ENCODE measurements at regions of chr14 and their contacts with region 1.

Region 1: GRCh38 chr14:51846631-51847488 is 13.6 kb upstream of the GNG2 start:
- H3K4me3 Mint-ChIP-seq: peak overlapping the region; percentile 75
- H3K27ac Mint-ChIP-seq: peak overlapping the region; percentile 93
- H3K4me1 Mint-ChIP-seq: peaks cover 62% of the 10 kb centered on the region
- H3K27me3 Mint-ChIP-seq: no peaks in the 10 kb centered on the region

Region 2: DNA sequence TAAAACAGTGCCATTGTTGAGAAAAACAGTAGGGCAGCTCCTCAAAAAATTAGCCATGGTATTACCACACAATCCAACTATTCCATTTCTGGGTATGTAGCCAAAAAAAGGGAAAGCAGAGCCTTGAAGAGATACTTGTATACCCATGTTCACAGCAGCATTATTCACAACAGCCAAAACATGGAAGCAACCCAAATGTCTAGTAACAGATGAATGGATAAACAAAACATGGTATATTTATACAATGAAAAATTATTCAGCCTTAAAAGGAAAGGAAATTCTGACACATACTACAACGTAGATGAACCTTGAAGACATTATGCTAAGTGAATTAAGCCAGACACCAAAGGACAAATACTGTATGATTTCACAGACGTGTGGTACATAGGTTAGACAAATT is 54.0 kb before region 1 on chr14:
- intact Hi-C with region 1: loop called (anchors 5 kb)
- H3K4me3 Mint-ChIP-seq: no peak overlapping the region
- H3K27ac Mint-ChIP-seq: no peak overlapping the region
- H3K4me1 Mint-ChIP-seq: peaks cover 40% of the 10 kb centered on the region
- H3K27me3 Mint-ChIP-seq: no peaks in the 10 kb centered on the region

Region 3: GRCh38 chr14:51821822-51822221 is 25.0 kb before region 1 on chr14:
- intact Hi-C with region 1: no loop called
- H3K4me3 Mint-ChIP-seq: no peak overlapping the region
- H3K27ac Mint-ChIP-seq: no peak overlapping the region
- H3K4me1 Mint-ChIP-seq: peaks cover 5% of the 10 kb centered on the region
- H3K27me3 Mint-ChIP-seq: peaks cover 15% of the 10 kb centered on the region

Region 4: DNA sequence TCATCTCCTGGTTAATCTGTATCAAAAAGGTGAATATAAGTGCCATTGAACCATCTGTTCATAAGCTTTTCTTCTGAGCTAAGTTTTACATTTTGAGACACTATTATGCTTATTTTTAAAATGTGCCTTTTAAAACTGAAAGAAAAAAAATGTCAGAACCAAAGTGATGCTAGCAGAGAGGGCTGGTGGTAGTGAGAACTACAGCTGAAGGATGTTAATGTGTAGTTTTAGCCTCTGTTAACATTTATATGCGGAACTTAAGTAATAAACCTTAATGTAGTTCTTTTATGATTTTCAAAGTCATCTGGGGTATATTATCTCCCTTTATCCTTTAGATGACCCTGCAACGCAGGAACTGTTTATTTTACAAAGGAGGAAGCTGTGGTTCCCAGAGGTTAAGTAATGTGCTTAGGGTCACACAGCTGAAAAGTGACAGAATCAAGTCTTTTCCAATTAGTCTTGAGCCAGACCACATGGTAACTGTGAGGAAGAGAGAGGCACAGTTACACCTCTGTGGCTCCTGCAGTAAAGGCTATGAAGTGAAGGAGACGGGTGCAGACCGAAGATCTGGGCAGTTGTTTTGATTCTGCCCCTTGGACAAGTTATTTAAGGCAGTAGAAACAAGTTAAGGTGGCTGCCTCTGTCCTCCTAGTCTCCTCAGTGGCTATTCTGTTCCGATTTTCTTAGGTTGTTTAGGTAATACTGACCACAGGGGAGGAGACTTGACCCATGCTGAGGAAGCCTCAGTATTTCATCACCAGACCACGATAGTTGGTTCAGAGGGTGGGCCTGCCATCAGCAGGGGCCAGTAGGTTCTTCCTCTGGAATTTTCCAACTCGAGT is 37.4 kb after region 1 on chr14:
- intact Hi-C with region 1: no loop called
- H3K4me3 Mint-ChIP-seq: no peak overlapping the region
- H3K27ac Mint-ChIP-seq: peak overlapping the region; percentile 43
- H3K4me1 Mint-ChIP-seq: peaks cover 30% of the 10 kb centered on the region
- H3K27me3 Mint-ChIP-seq: peaks cover 9% of the 10 kb centered on the region

Measured in dendritic cell treated with granulocyte-macrophage colony-stimulating factor and Interleukin-4, amounts not matched to agents 40 ng/mL and 50 ng/mL, for 4 days (primary cell).